Activated B cell treated with CpG ODN at 0.5 μM for 24 hours (primary cell): ENCODE measurements at regions of chr19 and their contacts with region 1.

Region 1: GRCh38 chr19:46788262-46788967 is at the start of gene SLC1A5:
- DNase-seq: peak; percentile 96
- ATAC-seq: peak; percentile 83
- H3K4me3 Mint-ChIP-seq: peak within 1 kb of the TSS; percentile 95
- H3K27ac Mint-ChIP-seq: peak within 1 kb of the TSS; percentile 95
- H3K4me1 Mint-ChIP-seq: peaks cover 48% of the 10 kb centered on the region
- H3K27me3 Mint-ChIP-seq: no peaks in the 10 kb centered on the region
- CTCF ChIP-seq: no peak
- total RNA-seq, gene SLC1A5: 70.7 and 77.9 TPM in 2 replicates

Region 2: GRCh38 chr19:46661020-46661731 is 127.2 kb before region 1 on chr19 and contains the start of gene DACT3:
- CTCF ChIA-PET with region 1: no interaction called
- POLR2A ChIA-PET with region 1: interaction called, 3 read pairs
- intact Hi-C with region 1: loop called (anchors 1 kb)
- DNase-seq: peak; percentile 100
- ATAC-seq: peak; percentile 91
- H3K4me3 Mint-ChIP-seq: peak within 1 kb of the TSS; percentile 83
- H3K27ac Mint-ChIP-seq: peak within 1 kb of the TSS; percentile 78
- H3K4me1 Mint-ChIP-seq: peaks cover 23% of the 10 kb centered on the region
- H3K27me3 Mint-ChIP-seq: peaks cover 17% of the 10 kb centered on the region
- CTCF ChIP-seq: no peak
- total RNA-seq, gene DACT3: 0.49 and 0.75 TPM in 2 replicates

Region 3: GRCh38 chr19:46746281-46747013 is 42.0 kb before region 1 on chr19 and contains the start of gene STRN4:
- CTCF ChIA-PET with region 1: interaction called, 3 read pairs
- POLR2A ChIA-PET with region 1: interaction called, 3 read pairs
- intact Hi-C with region 1: loop called (anchors 5 kb)
- DNase-seq: peak; percentile 51
- ATAC-seq: peak; percentile 66
- H3K4me3 Mint-ChIP-seq: peak within 1 kb of the TSS; percentile 94
- H3K27ac Mint-ChIP-seq: peak within 1 kb of the TSS; percentile 83
- H3K4me1 Mint-ChIP-seq: peaks cover 64% of the 10 kb centered on the region
- H3K27me3 Mint-ChIP-seq: no peaks in the 10 kb centered on the region
- CTCF ChIP-seq: no peak
- total RNA-seq, gene STRN4: 83.9 and 90.4 TPM in 2 replicates

Region 4: DNA sequence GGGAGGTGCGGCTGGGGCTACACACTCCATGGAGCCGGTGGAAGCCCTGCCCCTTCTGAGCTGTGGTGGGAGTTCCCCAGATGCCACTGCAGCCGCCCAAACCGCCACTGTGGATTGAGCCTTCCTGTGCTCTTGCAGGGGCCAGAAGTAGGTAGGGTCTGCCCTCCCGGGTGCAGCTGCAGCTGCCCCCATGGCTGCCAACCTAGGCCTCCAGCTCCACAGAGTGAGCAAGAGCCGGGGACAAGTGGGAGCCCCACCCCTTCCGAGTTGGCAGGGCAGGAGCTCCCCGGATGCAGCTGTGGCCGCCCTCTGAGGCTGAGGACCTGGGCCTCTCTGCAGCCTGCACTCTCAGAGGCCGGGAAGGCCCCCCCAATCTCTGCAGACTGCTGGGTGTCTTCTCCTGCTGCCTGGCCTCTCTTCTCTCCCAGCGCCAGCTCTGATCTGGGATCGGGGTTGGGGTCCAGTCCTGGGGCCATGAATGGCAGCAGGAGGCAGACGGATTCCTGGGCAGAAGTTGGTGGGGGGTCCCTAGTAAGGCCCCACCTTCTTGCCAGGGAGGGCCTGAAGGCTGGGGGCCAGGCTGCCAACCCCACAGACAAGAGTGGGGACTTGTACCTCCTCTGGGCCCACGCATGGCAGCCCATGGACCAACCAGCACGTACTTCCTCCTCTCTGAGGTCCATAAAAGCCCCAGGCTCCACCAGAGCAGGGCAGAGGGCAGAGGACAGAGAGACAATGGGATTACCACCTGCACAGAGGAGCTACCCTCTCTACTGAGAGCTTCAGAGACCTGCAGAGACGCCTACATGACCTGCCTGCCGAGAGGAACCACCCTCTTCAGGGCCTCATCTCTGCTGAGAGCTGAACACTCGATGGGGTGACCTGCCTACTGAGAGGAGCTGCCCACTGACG is 33.3 kb after region 1 on chr19:
- CTCF ChIA-PET with region 1: interaction called, 11 read pairs
- POLR2A ChIA-PET with region 1: interaction called, 242 read pairs
- intact Hi-C with region 1: loop called (anchors 1 kb)
- DNase-seq: peak; percentile 54
- ATAC-seq: peak; percentile 71
- H3K4me3 Mint-ChIP-seq: peak overlapping the region; percentile 48
- H3K27ac Mint-ChIP-seq: peak overlapping the region; percentile 90
- H3K4me1 Mint-ChIP-seq: peaks cover 61% of the 10 kb centered on the region
- H3K27me3 Mint-ChIP-seq: no peaks in the 10 kb centered on the region
- CTCF ChIP-seq: no peak

Region 5: DNA sequence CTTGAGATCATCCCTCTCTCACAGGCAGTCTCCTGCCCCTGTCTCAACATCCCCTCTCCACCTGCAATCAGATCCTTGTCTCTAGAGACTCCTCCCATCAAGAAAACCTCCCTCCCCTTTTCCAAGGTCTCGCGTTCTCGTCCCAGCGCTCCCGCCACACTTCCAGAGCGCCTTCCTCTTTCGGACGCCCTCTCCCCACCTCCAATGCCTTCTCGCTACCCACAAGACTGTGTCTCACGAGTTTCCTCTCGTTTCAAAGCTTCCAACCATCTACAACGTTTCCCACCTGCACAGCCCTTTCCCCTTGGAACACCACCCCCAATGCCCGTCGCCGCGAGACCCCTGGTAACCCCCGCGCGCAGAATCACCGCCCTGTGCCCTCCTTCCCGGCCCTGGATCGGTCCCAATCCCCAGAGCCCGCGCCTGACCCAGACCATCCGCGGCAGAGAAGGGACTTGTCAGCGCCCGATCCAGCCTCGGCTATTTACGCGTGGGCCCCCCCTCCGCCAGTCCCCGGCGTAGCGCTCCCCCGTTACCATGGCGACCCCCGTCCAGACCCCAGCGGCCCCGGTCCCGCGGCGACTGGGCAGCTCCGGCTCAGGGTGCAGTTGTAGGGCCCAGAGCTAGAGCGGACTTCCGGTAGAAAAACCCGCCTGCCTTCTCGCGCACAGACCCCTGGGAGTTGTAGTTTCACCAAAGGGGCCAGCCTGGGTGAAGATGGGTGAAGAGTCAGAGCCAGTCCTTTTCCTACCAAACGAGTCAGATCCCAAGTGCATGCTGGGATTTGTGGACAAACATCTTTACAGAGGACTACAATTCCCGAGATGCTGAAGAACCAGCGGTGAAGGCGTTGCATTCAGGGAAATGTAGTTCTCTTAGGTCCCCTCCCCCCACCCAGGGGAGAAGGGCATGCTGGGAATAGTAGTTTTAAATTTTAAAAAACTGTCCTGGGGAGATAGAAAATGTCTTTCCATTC is 62.1 kb after region 1 on chr19 and contains the start of gene AP2S1:
- CTCF ChIA-PET with region 1: no interaction called
- POLR2A ChIA-PET with region 1: interaction called, 10 read pairs
- intact Hi-C with region 1: loop called (anchors 1 kb)
- DNase-seq: peak; percentile 84
- ATAC-seq: peak; percentile 91
- H3K4me3 Mint-ChIP-seq: peak within 1 kb of the TSS; percentile 96
- H3K27ac Mint-ChIP-seq: peak within 1 kb of the TSS; percentile 82
- H3K4me1 Mint-ChIP-seq: peaks cover 37% of the 10 kb centered on the region
- H3K27me3 Mint-ChIP-seq: no peaks in the 10 kb centered on the region
- CTCF ChIP-seq: no peak
- total RNA-seq, gene AP2S1: 74.7 and 81.3 TPM in 2 replicates

Region 6: GRCh38 chr19:46975925-46976782 is 187.7 kb after region 1 on chr19:
- CTCF ChIA-PET with region 1: no interaction called
- POLR2A ChIA-PET with region 1: no interaction called
- intact Hi-C with region 1: no loop called
- DNase-seq: no peak
- ATAC-seq: no peak
- H3K4me3 Mint-ChIP-seq: no peak overlapping the region
- H3K27ac Mint-ChIP-seq: no peak overlapping the region
- H3K4me1 Mint-ChIP-seq: peaks cover 25% of the 10 kb centered on the region
- H3K27me3 Mint-ChIP-seq: no peaks in the 10 kb centered on the region
- CTCF ChIP-seq: no peak

Region 7: DNA sequence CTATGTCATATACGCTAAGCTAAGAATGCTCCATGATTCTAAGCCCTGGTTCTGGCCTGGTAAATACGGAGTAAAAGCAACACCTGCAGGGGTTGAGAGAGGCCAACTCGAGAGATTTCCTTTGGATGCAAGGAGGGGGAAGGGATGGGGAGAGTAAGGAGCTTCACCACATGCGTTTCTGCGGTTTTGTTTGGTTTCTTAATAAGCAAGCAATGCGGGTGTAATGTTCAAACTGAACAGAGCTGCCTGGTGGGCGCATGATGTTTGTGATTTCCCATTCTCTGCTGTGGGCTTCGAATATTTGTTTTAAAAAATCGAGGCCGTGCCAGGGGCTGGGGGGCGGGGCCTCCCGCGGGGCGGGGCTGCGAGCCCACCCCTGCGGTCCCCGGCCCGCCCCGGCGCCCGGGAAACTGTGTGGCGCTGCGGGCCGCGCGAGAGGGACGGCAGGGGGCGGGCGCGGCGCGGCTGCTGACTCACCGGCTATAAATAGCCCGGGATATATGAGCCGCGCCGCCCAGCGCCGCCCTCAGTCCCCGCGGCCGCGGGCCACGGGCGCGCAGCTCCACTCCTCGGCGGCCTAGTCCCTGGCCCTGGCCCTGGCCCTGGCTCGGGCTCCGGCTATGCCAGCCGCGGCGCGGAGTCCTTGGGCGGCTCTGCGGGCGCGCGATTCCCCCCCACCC is 437.5 kb after region 1 on chr19:
- CTCF ChIA-PET with region 1: no interaction called
- POLR2A ChIA-PET with region 1: interaction called, 4 read pairs
- intact Hi-C with region 1: loop called (anchors 10 kb)
- DNase-seq: peak; percentile 94
- ATAC-seq: peak; percentile 61
- H3K4me3 Mint-ChIP-seq: peak overlapping the region; percentile 85
- H3K27ac Mint-ChIP-seq: peak overlapping the region; percentile 89
- H3K4me1 Mint-ChIP-seq: peaks cover 16% of the 10 kb centered on the region
- H3K27me3 Mint-ChIP-seq: no peaks in the 10 kb centered on the region
- CTCF ChIP-seq: no peak